SK-N-SH (cell line): ENCODE measurements at regions of chr4 and their contacts with region 1.

Region 1: DNA sequence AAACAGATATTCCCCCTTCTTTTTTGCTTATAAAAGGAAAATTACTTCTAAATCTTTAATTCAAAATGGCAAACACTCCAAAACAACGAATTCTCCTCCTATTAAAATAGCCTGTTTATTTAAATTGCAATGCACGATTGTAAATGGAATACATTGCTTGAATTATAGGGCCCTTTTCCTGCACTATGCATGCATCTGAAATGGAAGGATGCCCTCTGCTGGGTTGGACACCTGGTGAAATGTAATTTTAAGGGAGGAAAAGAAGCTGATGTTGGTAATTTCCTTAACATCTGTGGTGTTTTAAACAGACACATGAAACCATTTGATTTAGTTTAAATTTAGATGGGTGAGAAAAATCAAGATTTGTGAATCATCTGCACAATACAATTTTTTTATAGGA is 72.8 kb downstream of the GRXCR1 start:
- DNase-seq: peak; percentile 12
- H3K4me3 ChIP-seq: no peak overlapping the region
- H3K27ac ChIP-seq: no peak overlapping the region
- H3K4me1 ChIP-seq: no peaks in the 10 kb centered on the region
- H3K27me3 ChIP-seq: no peaks in the 10 kb centered on the region
- CTCF ChIP-seq: no peak
- EP300 ChIP-seq: no peak
- RAD21 ChIP-seq: peak; percentile 83

Region 2: GRCh38 chr4:42436928-42437565 is 528.3 kb before region 1 on chr4:
- CTCF ChIA-PET with region 1: no interaction called
- POLR2A ChIA-PET with region 1: no interaction called
- DNase-seq: peak; percentile 24
- H3K4me3 ChIP-seq: no peak overlapping the region
- H3K27ac ChIP-seq: peak overlapping the region in 1 of 2 experiments; percentile 64; a peak in 2 of 4 replicates
- H3K4me1 ChIP-seq: peaks cover 0 to 15% of the 10 kb centered on the region in 2 experiments; a peak in 2 of 4 replicates
- H3K27me3 ChIP-seq: no peaks in the 10 kb centered on the region
- CTCF ChIP-seq: no peak
- EP300 ChIP-seq: peak in 1 of 2 experiments; percentile 72; a peak in 2 of 4 replicates
- RAD21 ChIP-seq: no peak

Region 3: DNA sequence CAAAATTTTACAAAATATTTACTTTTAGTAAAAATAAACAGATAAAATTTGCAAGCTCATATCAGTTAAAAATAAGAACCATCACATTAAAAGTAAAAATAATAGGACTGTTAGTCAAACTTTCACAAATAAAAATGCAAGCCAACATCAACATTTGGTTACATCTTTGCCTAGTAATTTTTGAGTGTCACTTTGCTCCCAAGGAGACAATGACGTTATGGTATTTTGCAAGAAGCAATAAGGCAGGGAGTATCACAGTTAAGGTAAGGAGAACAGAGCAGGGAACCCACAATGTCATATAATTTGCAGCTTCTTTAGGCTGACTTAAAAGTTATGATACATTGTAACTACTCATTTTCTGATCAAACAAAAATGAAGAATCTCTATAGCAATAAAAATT is 407.2 kb before region 1 on chr4:
- CTCF ChIA-PET with region 1: interaction called, 14 read pairs
- POLR2A ChIA-PET with region 1: no interaction called
- DNase-seq: no peak
- H3K4me3 ChIP-seq: no peak overlapping the region
- H3K27ac ChIP-seq: no peak overlapping the region
- H3K4me1 ChIP-seq: no peaks in the 10 kb centered on the region; a peak in 1 of 4 replicates
- H3K27me3 ChIP-seq: no peaks in the 10 kb centered on the region
- CTCF ChIP-seq: no peak
- EP300 ChIP-seq: no peak
- RAD21 ChIP-seq: no peak

Region 4: DNA sequence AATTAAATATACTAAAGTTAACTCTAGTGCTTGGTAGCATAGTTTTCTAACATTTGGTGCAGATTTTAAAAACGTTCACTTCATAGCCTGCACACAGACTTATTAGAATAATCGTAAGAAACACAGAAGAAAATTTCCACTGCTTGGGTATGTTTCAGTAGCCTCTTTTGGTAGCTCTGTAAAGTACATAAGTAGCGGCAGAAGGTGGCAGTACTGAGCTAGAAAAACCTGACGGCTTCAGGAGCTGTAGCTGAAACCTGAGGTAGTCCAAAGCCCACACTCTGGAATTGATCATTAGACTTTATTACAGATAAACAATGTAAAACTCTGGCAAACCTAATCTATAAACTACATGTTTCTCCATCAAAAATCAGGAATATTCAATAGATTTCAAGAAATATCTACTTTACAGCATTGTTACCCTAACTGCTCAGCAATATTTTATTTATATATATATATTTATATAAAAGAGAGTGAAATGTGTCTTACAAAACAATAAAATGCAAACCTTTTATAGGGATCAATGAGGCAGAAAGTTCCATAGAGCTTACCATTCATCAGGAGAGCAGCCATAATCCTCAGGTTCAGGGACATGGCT is 396.6 kb before region 1 on chr4:
- CTCF ChIA-PET with region 1: interaction called, 31 read pairs
- POLR2A ChIA-PET with region 1: no interaction called
- DNase-seq: peak; percentile 64
- H3K4me3 ChIP-seq: no peak overlapping the region
- H3K27ac ChIP-seq: no peak overlapping the region
- H3K4me1 ChIP-seq: peaks cover 0 to 13% of the 10 kb centered on the region in 2 experiments; a peak in 2 of 4 replicates
- H3K27me3 ChIP-seq: no peaks in the 10 kb centered on the region
- CTCF ChIP-seq: peak; percentile 78
- EP300 ChIP-seq: no peak
- RAD21 ChIP-seq: peak; percentile 92

Region 5: DNA sequence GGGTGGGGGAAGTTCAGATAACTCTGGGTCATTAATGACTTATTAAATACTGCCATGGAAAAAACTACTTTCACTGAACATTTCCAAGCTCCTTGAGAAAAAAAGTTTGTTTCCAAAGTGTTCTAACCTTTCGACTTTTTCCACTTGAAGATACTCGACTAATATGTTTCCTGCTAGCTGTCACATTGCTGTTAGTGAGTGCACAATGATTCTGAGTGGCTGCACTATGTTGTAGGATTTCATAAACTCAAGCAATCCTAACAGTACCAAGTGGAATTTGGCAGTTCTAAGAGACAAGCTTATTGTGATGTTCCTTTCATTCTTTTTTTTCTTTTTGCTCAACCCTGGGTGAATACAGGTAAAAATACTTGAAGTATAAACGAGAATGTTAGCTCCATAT is 39.4 kb before region 1 on chr4:
- CTCF ChIA-PET with region 1: interaction called, 10 read pairs
- POLR2A ChIA-PET with region 1: no interaction called
- DNase-seq: no peak
- H3K4me3 ChIP-seq: no peak overlapping the region
- H3K27ac ChIP-seq: no peak overlapping the region
- H3K4me1 ChIP-seq: no peaks in the 10 kb centered on the region
- H3K27me3 ChIP-seq: no peaks in the 10 kb centered on the region
- CTCF ChIP-seq: no peak
- EP300 ChIP-seq: no peak
- RAD21 ChIP-seq: no peak

Region 6: GRCh38 chr4:42954963-42955669 is 10.2 kb before region 1 on chr4:
- CTCF ChIA-PET with region 1: interaction called, 10 read pairs
- POLR2A ChIA-PET with region 1: no interaction called
- DNase-seq: no peak
- H3K4me3 ChIP-seq: no peak overlapping the region
- H3K27ac ChIP-seq: no peak overlapping the region; a peak in 1 of 4 replicates
- H3K4me1 ChIP-seq: peaks cover 0 to 12% of the 10 kb centered on the region in 2 experiments; a peak in 1 of 4 replicates
- H3K27me3 ChIP-seq: no peaks in the 10 kb centered on the region
- CTCF ChIP-seq: no peak
- EP300 ChIP-seq: no peak
- RAD21 ChIP-seq: no peak